AG04449 (cell line): ENCODE measurements at regions of chr14 and their contacts with region 1.

Region 1: DNA sequence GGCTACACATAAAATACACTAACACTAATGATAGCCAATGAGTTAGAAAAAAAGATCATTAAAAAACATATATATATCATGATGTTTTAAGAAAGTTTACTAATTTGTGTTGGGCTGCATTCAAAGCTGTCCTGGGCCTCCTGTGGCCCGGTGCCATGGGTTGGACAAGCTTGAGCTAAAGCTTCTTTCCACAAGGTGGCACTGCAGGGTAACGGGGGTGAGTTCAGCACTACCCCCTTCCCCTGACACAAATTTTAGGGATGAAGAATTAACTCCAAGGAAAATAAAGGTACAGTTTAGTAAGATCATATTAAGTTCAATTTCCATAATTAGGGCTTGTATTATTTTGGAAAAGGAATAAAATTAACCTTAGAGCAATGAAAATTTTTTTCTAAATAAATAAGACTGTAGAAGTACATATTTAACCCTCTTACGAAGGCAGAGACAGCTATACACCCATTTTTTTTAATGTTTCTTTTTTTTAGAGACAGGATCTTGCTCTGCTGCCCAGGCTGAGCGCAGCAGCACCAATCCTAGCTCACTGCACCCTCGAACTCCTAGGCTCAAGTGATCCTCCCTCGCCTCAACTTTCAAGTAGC is 38.9 kb downstream of the PPP1R13B start:
- DNase-seq: no peak
- H3K4me3 ChIP-seq: no peak overlapping the region
- CTCF ChIP-seq: peak; percentile 82

Region 2: DNA sequence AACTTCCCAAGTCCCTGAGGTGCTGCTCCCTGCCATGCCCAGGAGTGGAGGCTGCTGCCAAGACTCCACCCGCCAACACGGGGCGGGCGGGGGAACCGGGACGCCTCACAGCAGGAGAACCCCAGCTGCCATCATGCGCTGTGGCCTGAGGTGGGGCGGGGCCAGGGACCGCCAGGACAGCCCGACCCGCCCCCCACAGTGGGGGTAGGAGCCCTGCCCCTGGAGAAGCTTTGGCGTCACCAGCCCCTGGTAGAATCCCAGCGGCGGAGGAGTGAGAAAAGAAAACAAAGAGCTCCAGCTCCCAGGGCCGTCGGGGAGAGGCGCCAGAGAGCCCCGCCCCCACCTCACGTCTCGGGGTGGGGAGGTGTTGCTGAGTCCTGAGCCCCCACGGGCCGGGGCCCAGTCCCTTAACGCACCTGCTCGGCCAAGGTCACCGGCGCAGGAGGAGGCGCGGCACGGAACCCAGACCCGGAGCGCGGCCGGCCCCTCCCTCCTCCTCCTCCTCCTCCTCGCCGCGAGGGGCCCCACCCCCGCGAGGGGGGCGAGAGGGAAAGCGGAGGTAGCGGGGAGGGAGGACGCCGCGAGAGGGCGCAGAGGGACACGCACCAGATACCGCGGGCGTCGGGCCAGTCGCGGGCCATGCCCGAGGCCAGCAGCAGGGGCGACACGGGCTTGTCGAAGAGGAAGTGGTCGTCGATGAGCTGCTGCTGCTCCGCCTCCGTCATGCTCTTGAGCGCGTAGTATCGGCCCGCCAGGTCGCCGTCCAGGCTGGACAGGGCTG is 287.7 kb before region 1 on chr14:
- CTCF ChIA-PET with region 1: no interaction called
- POLR2A ChIA-PET with region 1: no interaction called
- DNase-seq: no peak
- H3K4me3 ChIP-seq: peak overlapping the region; percentile 46
- CTCF ChIP-seq: peak; percentile 69

Region 3: GRCh38 chr14:103788086-103788485 is 20.4 kb before region 1 on chr14:
- CTCF ChIA-PET with region 1: interaction called, 15 read pairs
- POLR2A ChIA-PET with region 1: no interaction called
- DNase-seq: no peak
- H3K4me3 ChIP-seq: no peak overlapping the region
- CTCF ChIP-seq: no peak

Region 4: GRCh38 chr14:103825101-103825500 is 16.6 kb after region 1 on chr14:
- CTCF ChIA-PET with region 1: interaction called, 43 read pairs
- POLR2A ChIA-PET with region 1: no interaction called
- DNase-seq: no peak
- H3K4me3 ChIP-seq: no peak overlapping the region
- CTCF ChIP-seq: no peak

Region 5: DNA sequence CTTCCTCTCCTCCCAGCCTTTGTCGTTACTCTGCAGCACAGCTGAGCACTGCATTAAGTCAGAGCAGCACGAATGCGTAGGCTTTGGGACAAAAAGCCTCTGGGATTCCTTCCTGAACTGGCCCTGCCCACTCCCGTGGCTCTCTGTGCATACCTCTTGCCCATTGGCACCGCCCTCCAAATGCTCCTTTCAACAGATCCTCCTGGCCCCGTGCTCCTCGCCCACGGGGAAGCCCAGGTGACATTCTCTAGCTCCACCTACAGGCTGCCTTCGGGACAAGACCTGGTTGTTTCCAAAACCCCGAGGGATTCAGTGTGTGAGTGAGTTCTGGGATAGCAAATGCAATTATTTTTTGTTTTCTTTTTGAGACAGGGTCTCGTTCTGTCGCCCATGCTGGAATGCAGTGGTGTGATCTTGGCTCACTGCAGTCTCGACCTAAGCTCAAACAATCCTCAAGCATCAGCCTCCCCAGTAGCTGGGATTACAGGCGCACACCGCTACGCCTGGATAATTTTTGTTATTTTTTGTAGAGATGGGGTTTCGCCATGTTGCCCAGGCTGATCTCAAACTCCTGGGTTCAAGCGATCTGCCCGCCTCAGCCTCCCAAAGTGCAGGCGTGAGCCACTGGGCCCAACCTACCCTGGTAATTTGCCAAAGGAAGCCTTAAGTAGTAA is 101.9 kb after region 1 on chr14:
- CTCF ChIA-PET with region 1: interaction called, 21 read pairs
- POLR2A ChIA-PET with region 1: interaction called, 3 read pairs
- DNase-seq: peak; percentile 3
- H3K4me3 ChIP-seq: no peak overlapping the region; the same call in 1 of the 2 replicates
- CTCF ChIP-seq: peak; percentile 71

Region 6: DNA sequence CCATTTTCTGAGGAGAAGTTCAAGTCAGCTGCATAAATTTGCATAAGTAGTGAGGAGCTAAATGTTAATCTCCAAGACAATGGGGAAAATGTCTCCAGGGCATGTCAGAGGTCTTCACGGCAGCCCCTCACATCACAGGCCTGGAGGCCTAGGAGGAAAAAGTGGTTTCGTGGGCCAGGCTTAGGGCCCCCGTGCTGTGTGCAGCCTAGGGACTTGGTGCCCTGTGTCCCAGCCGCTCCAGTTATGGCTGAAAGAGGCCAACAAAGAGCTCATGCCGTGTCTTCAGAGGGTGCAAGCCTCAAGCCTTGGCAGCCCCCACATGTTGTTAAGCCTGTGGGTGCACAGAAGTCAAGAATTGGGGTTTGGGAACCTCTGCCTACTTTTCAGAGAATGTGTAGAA is 175.7 kb after region 1 on chr14:
- CTCF ChIA-PET with region 1: interaction called, 86 read pairs
- POLR2A ChIA-PET with region 1: no interaction called
- DNase-seq: no peak
- H3K4me3 ChIP-seq: no peak overlapping the region
- CTCF ChIP-seq: no peak